HCT116 (cell line): ENCODE measurements at regions of chr5 and their contacts with region 1.

Region 1: DNA sequence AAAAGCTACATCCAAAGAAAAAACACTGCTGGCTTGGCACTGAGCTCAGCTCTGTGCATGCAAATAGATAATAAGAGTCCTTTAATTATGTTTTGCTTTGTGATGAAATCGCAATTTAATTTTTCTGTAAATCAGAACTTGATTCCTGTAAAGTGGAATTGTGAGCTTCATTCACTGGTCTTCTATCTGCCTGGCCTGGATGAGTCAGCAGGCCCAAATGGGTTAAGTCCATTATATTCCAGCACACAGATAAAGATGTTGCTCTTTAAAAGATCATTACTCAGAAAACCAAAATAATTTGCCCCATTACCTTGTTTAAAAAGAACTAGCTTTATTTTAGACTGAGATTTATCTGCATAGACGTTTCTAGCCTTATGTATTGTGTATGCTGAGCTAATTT is 90.4 kb downstream of the CARTPT start:
- DNase-seq: no peak
- ATAC-seq: no peak
- H3K4me3 ChIP-seq: no peak overlapping the region
- H3K27ac ChIP-seq: no peak overlapping the region
- H3K4me1 ChIP-seq: no peaks in the 10 kb centered on the region
- H3K27me3 ChIP-seq: no peaks in the 10 kb centered on the region
- CTCF ChIP-seq: no peak
- POLR2A ChIP-seq: no peak
- RAD21 ChIP-seq: no peak

Region 2: DNA sequence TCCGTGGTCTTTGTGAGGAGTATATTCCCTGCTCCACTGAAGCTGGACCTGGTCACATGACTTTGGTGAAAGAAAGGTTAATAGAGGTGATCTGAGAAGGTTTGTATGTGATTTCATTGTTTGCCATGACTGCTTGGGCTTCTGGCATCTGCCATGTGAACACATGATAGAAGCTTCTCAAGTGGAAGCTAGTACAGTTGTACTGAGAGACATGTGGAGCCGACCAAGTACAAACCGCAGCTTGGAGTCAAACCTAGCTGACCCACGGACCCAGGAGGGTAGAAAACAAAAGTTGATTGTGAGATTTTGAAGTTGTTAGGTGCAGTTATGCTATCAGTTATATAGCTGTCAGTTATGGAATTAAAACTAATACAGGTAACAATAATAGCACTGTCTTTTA is 50.1 kb after region 1 on chr5:
- CTCF ChIA-PET with region 1: no interaction called
- POLR2A ChIA-PET with region 1: no interaction called
- RAD21 ChIA-PET with region 1: no interaction called
- intact Hi-C with region 1: loop called (anchors 10 kb)
- DNase-seq: no peak
- ATAC-seq: no peak
- H3K4me3 ChIP-seq: no peak overlapping the region
- H3K27ac ChIP-seq: no peak overlapping the region
- H3K4me1 ChIP-seq: no peaks in the 10 kb centered on the region
- H3K27me3 ChIP-seq: no peaks in the 10 kb centered on the region
- CTCF ChIP-seq: no peak
- POLR2A ChIP-seq: no peak
- RAD21 ChIP-seq: no peak

Region 3: DNA sequence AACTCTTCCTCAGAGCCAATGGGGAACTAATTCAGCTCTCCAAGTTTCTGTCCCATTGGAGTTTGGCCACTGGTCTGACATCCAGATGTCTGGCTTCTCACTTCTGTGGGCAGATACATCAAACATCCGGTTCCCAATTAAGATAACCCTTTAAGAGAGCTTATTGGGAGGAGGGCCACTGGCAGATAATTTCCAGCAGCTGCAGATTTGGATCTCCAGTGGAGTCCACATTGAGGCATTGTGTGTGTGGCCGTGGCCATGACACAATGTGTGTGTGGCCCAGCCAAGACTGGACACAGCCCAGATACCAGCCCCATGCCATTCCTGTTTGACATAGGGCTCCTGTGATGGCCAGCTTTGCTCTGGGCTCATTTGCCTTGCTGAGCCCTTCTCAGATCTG is 187.3 kb after region 1 on chr5:
- CTCF ChIA-PET with region 1: no interaction called
- POLR2A ChIA-PET with region 1: no interaction called
- RAD21 ChIA-PET with region 1: no interaction called
- intact Hi-C with region 1: no loop called
- DNase-seq: no peak
- ATAC-seq: no peak
- H3K4me3 ChIP-seq: no peak overlapping the region
- H3K27ac ChIP-seq: no peak overlapping the region
- H3K4me1 ChIP-seq: no peaks in the 10 kb centered on the region
- H3K27me3 ChIP-seq: no peaks in the 10 kb centered on the region
- CTCF ChIP-seq: no peak
- POLR2A ChIP-seq: no peak
- RAD21 ChIP-seq: no peak